HEK293T (cell line): ENCODE measurements at regions of chr1 and their contacts with region 1.

Region 1: GRCh38 chr1:205485338-205486228 is 18.9 kb upstream of the CDK18 start:
- DNase-seq: peak; percentile 92

Region 2: GRCh38 chr1:205354259-205354904 is 131.2 kb before region 1 on chr1:
- CTCF ChIA-PET with region 1: interaction called, 12 read pairs
- POLR2A ChIA-PET with region 1: no interaction called
- DNase-seq: peak; percentile 71

Region 3: GRCh38 chr1:205396967-205397616 is 88.5 kb before region 1 on chr1:
- CTCF ChIA-PET with region 1: interaction called, 35 read pairs
- POLR2A ChIA-PET with region 1: no interaction called
- DNase-seq: peak; percentile 82

Region 4: GRCh38 chr1:205440476-205441317 is 44.9 kb before region 1 on chr1:
- CTCF ChIA-PET with region 1: interaction called, 11 read pairs
- POLR2A ChIA-PET with region 1: no interaction called
- DNase-seq: peak; percentile 41

Region 5: GRCh38 chr1:205473966-205474365 is 11.6 kb before region 1 on chr1:
- CTCF ChIA-PET with region 1: interaction called, 13 read pairs
- POLR2A ChIA-PET with region 1: no interaction called
- DNase-seq: no peak

Region 6: DNA sequence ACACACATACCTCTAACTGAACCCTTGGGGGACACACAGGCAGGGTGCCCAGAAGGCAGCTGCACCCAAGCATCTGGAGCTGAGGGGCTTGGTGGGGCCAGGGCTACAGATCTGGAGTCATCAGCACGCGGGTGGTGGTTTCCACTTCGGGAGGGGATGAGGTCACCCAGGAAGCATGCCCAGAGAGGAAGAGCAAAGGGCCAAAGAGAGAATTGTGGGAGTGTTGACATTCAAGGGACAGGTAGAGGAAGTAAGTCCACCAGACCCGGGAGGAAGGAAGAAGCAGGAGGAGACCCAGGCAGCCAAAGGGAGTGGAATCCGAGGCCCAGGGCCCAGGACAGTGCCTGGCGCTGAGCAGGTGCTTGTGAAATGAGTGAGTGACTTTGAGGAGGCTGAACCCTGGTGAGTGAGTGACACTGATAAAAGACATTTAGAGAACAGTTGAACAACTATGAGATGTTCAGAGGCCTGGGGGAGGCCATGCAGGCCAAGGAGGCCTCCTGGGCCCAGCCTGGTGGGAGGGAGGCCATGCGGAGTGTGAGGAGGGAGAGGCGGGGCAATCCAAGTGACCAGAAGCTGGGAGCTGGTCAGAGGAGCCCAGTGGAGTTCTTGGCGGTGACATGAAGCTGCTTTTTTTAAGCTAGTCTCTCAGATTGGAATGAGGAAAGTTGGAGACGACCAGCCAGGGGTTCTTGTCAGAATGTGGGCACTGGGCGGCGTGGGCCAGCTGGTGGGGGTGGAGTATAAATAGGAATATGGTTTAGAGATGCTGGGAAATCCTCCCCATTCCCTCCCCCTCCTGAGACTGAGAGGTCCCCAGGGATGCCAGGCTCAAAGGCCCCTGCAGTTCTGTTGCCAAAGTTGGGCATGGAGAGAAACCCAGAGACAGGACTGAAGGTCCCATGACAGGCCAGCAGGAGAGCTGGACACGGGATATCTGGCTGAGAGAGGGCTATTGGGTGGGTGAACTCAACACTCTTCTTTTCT is 26.8 kb after region 1 on chr1:
- CTCF ChIA-PET with region 1: interaction called, 13 read pairs
- POLR2A ChIA-PET with region 1: no interaction called
- DNase-seq: no peak

Region 7: GRCh38 chr1:205523891-205524793 is 38.6 kb after region 1 on chr1:
- CTCF ChIA-PET with region 1: interaction called, 114 read pairs
- POLR2A ChIA-PET with region 1: interaction called, 3 read pairs
- DNase-seq: peak; percentile 85

Region 8: DNA sequence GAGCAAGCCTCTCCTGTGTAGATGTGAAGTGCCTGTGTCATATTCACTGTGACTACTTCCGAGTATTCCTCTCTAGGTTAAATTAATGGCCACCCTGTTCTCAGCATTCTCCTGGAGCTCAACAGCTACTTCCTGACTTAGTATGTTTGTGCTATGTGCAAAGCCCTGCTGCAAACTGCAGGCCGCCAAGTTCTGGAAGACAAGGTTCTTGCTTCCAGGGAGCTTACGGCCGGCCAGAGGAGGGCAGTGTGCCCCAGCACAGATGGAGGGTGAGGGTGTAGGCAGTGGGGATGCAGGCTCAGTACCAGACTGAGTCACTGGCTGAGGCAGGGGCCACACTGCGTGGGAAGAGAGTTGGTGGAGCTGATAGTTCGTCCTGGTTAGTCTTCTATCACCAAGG is 103.1 kb after region 1 on chr1:
- CTCF ChIA-PET with region 1: no interaction called
- POLR2A ChIA-PET with region 1: no interaction called
- DNase-seq: peak; percentile 45